Mammary epithelial cell (primary cell): ENCODE measurements at regions of chr17 and their contacts with region 1.

Region 1: GRCh38 chr17:75589012-75589918 is 1.7 kb downstream of the MYO15B start:
- DNase-seq: peak; percentile 64
- H3K4me3 ChIP-seq: peak overlapping the region; percentile 41 to 65 (median 46)
- H3K27ac ChIP-seq: no peak overlapping the region
- H3K4me1 ChIP-seq: peaks cover 6% of the 10 kb centered on the region
- H3K27me3 ChIP-seq: peaks cover 4% of the 10 kb centered on the region
- CTCF ChIP-seq: peak in 1 of 2 donors; percentile 30

Region 2: DNA sequence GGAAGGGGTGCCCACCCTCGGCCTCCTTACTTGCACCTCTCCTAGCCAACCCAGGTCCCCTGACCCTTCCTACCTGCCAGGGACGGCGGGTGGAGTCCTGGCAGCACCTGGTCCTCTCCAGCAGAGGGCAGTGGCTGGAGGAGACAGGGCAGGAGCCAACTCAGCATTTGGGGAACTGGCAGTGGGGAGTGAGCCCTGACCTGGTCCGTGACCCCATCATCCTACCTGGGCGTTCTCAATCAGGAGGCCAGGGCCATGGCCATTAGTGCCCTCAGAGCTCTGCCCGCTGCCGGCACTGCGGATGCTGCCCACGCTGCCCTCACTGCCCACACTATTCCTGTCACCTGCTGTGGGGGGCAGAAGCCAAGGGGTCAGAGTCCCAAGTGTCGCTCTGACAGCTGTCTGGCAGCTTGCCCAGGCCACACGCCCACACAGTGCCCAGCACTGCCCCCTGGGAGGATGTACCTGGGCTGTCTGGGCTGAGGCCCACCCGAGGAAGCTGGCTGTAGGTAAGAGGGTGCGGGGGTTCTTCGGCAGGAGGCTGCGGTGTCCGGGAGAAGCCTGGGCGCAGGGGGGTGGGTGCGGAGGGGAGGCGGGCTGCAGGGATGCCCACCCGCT is 84.8 kb before region 1 on chr17:
- CTCF ChIA-PET with region 1: no interaction called
- dilution Hi-C with region 1: no loop called
- in situ Hi-C with region 1: no loop called
- intact Hi-C with region 1: loop called (anchors 1 kb)
- DNase-seq: peak; percentile 13
- H3K4me3 ChIP-seq: no peak overlapping the region
- H3K27ac ChIP-seq: no peak overlapping the region
- H3K4me1 ChIP-seq: no peaks in the 10 kb centered on the region
- H3K27me3 ChIP-seq: no peaks in the 10 kb centered on the region
- CTCF ChIP-seq: peak; percentile 57 to 78

Region 3: GRCh38 chr17:75539967-75540711 is 49.1 kb before region 1 on chr17:
- CTCF ChIA-PET with region 1: no interaction called
- dilution Hi-C with region 1: loop called (anchors 5 kb)
- in situ Hi-C with region 1: no loop called
- intact Hi-C with region 1: no loop called
- DNase-seq: no peak
- H3K4me3 ChIP-seq: no peak overlapping the region
- H3K27ac ChIP-seq: no peak overlapping the region
- H3K4me1 ChIP-seq: peaks cover 10% of the 10 kb centered on the region
- H3K27me3 ChIP-seq: no peaks in the 10 kb centered on the region
- CTCF ChIP-seq: no peak

Region 4: DNA sequence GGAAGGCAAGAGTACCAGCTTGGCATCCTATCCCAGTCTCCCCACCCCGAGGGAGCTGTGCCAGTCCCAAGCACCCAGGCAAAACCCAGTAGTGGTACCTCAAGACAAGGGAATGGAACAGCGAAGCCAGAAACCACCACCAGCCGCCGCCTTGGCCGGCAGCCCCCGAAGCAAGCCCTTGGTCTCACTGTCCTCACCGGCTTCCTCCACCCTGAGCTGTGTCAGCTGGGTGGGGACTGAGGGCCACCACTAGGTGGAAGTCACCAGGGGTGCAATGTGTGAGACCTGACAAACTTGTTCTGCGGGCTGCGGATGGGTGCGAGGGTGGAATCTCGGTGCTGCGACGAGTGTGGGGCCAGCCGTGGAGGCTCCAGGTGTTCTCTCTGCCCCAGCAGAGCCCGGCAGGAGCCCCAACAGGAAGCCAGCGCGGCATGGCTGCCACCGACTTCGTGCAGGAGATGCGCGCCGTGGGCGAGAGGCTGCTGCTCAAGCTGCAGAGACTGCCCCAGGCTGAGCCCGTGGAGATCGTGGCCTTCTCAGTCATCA is 50.6 kb after region 1 on chr17:
- CTCF ChIA-PET with region 1: no interaction called
- dilution Hi-C with region 1: loop called (anchors 5 kb)
- in situ Hi-C with region 1: no loop called
- intact Hi-C with region 1: no loop called
- DNase-seq: no peak
- H3K4me3 ChIP-seq: no peak overlapping the region
- H3K27ac ChIP-seq: no peak overlapping the region
- H3K4me1 ChIP-seq: no peaks in the 10 kb centered on the region
- H3K27me3 ChIP-seq: no peaks in the 10 kb centered on the region
- CTCF ChIP-seq: no peak